Activated CD8-positive, alpha-beta memory T cell treated with anti-CD3 and anti-CD28 coated beads, Interleukin-2, amount 10 ng/mL, durations not matched to agents 7 days and 5 days (primary cell): ENCODE measurements at regions of chr1 and their contacts with region 1.

Region 1: DNA sequence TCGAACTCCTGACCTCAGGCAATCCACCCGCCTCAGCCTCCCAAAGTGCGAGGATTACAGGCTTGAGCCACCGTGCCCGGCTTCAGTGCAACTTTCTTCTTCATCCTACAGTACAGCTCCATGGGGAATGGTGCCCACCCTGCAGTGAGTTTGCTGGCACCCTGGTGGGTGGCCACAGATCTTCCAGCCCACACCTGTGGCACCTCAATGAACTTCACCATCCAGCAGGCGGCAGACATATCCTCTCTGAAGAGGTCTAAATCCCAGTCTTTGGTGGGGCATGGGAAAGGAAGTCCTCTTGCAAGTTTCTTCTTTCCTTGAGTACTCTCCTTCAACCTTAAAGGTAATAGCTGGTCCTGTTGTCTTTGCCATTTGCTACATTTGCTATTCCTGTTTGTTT is 18.1 kb upstream of the ZBTB8A start:
- DNase-seq: no peak
- ATAC-seq: no peak
- H3K4me3 Mint-ChIP-seq: peak overlapping the region; percentile 71
- H3K27ac Mint-ChIP-seq: no peak overlapping the region
- H3K4me1 Mint-ChIP-seq: peaks cover 6% of the 10 kb centered on the region
- H3K27me3 Mint-ChIP-seq: peaks cover 7% of the 10 kb centered on the region

Region 2: DNA sequence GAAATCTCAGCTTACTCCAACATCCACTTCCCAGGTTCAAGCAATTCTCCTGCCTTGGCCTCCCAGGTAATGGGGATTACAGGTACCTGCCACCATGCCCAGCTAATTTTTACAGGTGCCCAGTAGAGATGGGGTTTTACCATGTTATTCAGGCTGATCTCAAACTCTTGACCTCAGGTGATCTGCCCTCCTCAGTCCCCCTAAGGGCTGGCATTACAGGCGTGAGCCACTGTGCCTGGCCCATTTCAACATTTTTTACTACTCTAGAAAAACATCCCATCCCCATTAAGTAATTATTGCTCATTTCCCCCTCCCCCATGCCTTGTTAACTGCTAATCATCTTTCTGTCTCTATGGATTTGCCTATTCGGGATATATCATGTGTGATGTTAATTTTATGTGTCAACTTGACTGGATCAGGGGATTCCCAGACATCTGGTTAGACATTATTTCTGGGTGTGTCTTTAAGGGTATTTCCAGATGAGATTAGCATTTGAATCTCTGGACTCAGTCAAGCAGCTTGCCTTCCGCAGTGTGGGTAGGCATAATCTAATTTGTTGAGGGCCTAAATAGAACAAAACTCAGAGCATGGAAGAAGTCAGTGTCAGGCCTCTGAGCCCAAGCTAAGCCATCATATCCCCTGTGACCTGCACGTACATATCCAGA is 89.3 kb before region 1 on chr1:
- CTCF ChIA-PET with region 1: no interaction called
- DNase-seq: no peak
- ATAC-seq: no peak
- H3K4me3 Mint-ChIP-seq: no peak overlapping the region
- H3K27ac Mint-ChIP-seq: no peak overlapping the region
- H3K4me1 Mint-ChIP-seq: no peaks in the 10 kb centered on the region
- H3K27me3 Mint-ChIP-seq: peaks cover 55% of the 10 kb centered on the region

Region 3: DNA sequence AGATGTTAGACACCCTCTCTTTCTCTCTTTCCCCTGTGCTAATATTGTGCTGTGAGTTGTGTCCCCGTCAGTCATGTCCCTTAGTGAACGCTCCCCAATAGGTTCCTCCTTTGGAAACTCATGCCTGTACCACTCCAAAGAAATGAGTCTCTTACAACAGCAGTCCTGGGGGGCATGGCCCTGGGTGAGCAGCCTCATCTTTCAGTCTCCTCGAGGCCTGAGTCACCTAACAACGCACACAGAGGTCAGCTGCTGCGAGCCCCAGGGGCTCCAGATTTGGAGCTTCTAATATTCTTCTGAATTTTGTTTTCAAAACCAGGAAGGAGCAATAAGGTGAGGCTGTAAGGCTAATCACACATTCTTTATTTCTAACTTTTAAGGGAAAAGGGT is 12.4 kb before region 1 on chr1:
- CTCF ChIA-PET with region 1: interaction called, 10 read pairs
- DNase-seq: no peak
- ATAC-seq: no peak
- H3K4me3 Mint-ChIP-seq: no peak overlapping the region
- H3K27ac Mint-ChIP-seq: no peak overlapping the region
- H3K4me1 Mint-ChIP-seq: no peaks in the 10 kb centered on the region
- H3K27me3 Mint-ChIP-seq: peaks cover 37% of the 10 kb centered on the region

Region 4: DNA sequence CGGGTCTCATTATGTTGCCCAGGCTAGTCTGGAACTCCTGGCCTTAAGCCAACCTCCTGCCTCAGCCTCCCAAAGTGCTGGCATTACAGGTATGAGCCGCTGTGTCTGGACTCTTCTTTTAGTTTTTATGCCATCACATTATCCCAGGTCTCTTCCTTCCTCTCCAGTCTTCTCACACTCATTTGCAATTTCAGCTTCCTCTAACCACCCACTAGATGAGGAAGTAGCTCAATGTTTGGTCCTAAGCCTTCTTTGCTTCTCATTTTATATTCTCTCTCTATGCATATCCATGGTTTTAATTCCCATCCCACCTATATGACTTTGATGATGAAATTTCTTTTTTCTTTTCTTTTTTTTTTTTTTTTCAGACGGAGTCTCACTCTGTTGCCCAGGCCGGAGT is 15.0 kb after region 1 on chr1:
- CTCF ChIA-PET with region 1: interaction called, 24 read pairs
- DNase-seq: no peak
- ATAC-seq: no peak
- H3K4me3 Mint-ChIP-seq: no peak overlapping the region
- H3K27ac Mint-ChIP-seq: no peak overlapping the region
- H3K4me1 Mint-ChIP-seq: peaks cover 8% of the 10 kb centered on the region
- H3K27me3 Mint-ChIP-seq: peaks cover 68% of the 10 kb centered on the region

Region 5: DNA sequence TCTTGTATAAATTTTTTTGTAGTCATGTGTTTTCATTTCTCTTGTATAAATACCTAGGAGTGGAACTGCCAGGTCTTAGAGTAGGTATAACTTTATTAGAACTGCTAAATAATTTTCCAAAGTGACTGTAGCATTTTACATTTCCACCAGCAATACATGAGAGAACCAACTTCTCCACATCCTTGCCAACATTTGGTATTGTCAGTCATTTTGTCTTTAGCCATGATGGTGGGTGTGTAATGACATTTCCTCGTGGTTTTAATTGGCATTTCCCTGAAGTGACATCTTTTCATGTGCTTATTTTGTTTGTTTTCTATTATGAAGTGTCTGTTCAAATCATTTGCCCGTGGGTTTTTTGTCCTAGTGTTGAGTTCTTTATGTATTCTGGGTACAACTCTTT is 47.8 kb after region 1 on chr1:
- CTCF ChIA-PET with region 1: no interaction called
- DNase-seq: no peak
- ATAC-seq: no peak
- H3K4me3 Mint-ChIP-seq: no peak overlapping the region
- H3K27ac Mint-ChIP-seq: no peak overlapping the region
- H3K4me1 Mint-ChIP-seq: no peaks in the 10 kb centered on the region
- H3K27me3 Mint-ChIP-seq: peaks cover 18% of the 10 kb centered on the region

Region 6: DNA sequence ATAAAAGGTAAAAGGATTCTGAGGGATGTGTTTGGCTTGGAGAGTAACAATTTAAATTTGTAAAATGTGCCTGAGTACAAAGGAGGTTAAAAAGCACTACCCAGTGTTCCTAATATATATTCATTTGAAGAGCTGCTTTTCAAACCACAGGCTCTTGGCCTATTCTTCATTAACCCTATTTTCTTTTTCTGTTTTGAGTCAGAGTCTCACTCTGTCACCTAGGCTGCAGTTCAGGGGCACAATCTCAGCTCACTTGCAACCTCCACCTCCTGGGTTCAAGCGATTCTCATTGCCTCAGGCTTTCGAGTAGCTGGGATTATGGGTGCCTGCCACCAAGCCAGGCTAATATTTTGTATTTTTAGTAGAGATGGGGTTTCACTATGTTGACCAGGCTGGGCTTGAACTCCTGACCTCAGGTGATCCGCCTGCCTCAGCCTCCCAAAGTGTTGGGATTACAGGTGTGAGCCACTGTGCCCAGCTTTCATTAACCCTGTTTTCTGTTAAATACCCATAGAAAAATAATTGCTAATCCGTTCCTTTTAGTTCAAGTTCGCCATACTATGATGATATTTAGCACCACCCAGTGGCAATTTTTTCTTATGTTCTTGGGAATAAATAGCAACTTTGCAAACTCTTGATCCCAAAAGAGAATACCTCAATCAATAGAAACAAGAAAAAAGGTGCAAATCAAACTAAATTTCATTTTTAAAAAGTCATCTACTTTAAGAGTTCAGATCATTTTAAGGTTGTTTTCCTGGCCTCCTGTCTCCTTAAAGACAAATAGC is 98.7 kb after region 1 on chr1:
- CTCF ChIA-PET with region 1: interaction called, 13 read pairs
- DNase-seq: peak; percentile 51
- ATAC-seq: peak; percentile 71
- H3K4me3 Mint-ChIP-seq: no peak overlapping the region
- H3K27ac Mint-ChIP-seq: peak overlapping the region; percentile 12
- H3K4me1 Mint-ChIP-seq: peaks cover 37% of the 10 kb centered on the region
- H3K27me3 Mint-ChIP-seq: no peaks in the 10 kb centered on the region

Region 7: GRCh38 chr1:32650752-32651460 is 129.7 kb after region 1 on chr1 and contains the start of gene RBBP4:
- CTCF ChIA-PET with region 1: interaction called, 14 read pairs
- DNase-seq: peak; percentile 99
- ATAC-seq: peak; percentile 91
- H3K4me3 Mint-ChIP-seq: peak within 1 kb of the TSS; percentile 90
- H3K27ac Mint-ChIP-seq: peak within 1 kb of the TSS; percentile 99
- H3K4me1 Mint-ChIP-seq: peaks cover 52% of the 10 kb centered on the region
- H3K27me3 Mint-ChIP-seq: no peaks in the 10 kb centered on the region
- total RNA-seq, gene RBBP4: 284 to 336 TPM

Region 8: GRCh38 chr1:32773018-32773763 is 252.0 kb after region 1 on chr1:
- CTCF ChIA-PET with region 1: interaction called, 27 read pairs
- DNase-seq: peak; percentile 82
- ATAC-seq: peak; percentile 81
- H3K4me3 Mint-ChIP-seq: no peak overlapping the region
- H3K27ac Mint-ChIP-seq: peak overlapping the region; percentile 21
- H3K4me1 Mint-ChIP-seq: peaks cover 9% of the 10 kb centered on the region
- H3K27me3 Mint-ChIP-seq: no peaks in the 10 kb centered on the region